Activated CD4-positive, alpha-beta memory T cell treated with anti-CD3 and anti-CD28 coated beads, Interleukin-2, amount 10 ng/mL, durations not matched to agents 7 days and 5 days (primary cell): ENCODE measurements at regions of chr16 and their contacts with region 1.

Region 1: GRCh38 chr16:74650966-74651567 is 15.6 kb downstream of the RFWD3 start:
- DNase-seq: no peak
- H3K4me3 Mint-ChIP-seq: no peak overlapping the region
- H3K27ac Mint-ChIP-seq: no peak overlapping the region
- H3K4me1 Mint-ChIP-seq: peaks cover 24% of the 10 kb centered on the region
- H3K27me3 Mint-ChIP-seq: no peaks in the 10 kb centered on the region

Region 2: GRCh38 chr16:74580833-74581232 is 70.2 kb before region 1 on chr16:
- CTCF ChIA-PET with region 1: no interaction called
- POLR2A ChIA-PET with region 1: no interaction called
- DNase-seq: no peak
- H3K4me3 Mint-ChIP-seq: no peak overlapping the region
- H3K27ac Mint-ChIP-seq: no peak overlapping the region
- H3K4me1 Mint-ChIP-seq: peaks cover 44% of the 10 kb centered on the region
- H3K27me3 Mint-ChIP-seq: no peaks in the 10 kb centered on the region

Region 3: GRCh38 chr16:74637742-74638453 is 13.2 kb before region 1 on chr16:
- CTCF ChIA-PET with region 1: interaction called, 16 read pairs
- POLR2A ChIA-PET with region 1: interaction called, 5 read pairs
- DNase-seq: no peak
- H3K4me3 Mint-ChIP-seq: no peak overlapping the region
- H3K27ac Mint-ChIP-seq: no peak overlapping the region
- H3K4me1 Mint-ChIP-seq: peaks cover 3% of the 10 kb centered on the region
- H3K27me3 Mint-ChIP-seq: no peaks in the 10 kb centered on the region

Region 4: DNA sequence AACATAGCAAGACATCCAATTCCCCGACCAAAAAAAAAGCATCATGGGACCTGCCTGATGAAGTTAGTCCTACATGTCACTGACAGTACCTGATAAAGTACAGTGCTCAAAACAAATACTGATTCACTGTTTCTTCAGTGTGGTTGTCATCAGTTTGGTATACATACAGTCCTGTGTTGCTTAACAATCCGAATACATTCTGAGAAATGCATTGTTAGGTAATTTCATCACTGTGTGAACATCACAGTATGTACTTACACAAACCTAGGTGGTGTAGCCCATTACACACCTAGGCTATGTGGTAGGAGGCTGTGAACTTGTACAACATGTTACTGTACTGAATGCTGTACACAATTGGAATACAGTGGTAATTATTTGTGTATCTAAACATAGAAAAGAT is 142.5 kb after region 1 on chr16:
- CTCF ChIA-PET with region 1: no interaction called
- POLR2A ChIA-PET with region 1: no interaction called
- DNase-seq: no peak
- H3K4me3 Mint-ChIP-seq: no peak overlapping the region
- H3K27ac Mint-ChIP-seq: no peak overlapping the region
- H3K4me1 Mint-ChIP-seq: no peaks in the 10 kb centered on the region
- H3K27me3 Mint-ChIP-seq: peaks cover 31% of the 10 kb centered on the region